K562 (cell line): ENCODE measurements at regions of chr9 and their contacts with region 1.

Region 1: DNA sequence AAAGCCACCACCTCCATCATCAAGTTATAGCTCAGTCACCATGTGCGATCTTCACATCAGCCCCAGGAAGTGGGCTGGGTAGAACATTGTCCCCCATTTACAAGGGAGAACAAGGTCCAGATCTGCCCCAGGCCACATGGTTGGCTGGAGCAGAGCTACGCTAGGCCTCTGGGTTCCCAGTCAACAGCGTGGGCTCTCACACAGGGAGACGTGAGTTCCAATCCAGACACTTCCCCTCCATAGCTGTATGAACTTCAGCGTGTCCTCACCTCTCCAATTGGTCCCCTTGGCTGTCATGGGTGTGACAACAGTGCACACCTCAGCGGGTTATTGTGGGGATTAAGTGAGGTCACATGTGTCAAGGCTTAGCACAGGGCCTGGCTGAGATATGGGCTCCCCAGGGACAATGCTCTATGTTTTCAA is 20.0 kb downstream of the AKNA start:
- DNase-seq: no peak
- ATAC-seq: no peak
- H3K4me3 ChIP-seq: no peak overlapping the region
- H3K27ac ChIP-seq: no peak overlapping the region
- H3K4me1 ChIP-seq: peaks cover 0 to 13% of the 10 kb centered on the region in 2 experiments; a peak in 2 of 5 replicates
- H3K27me3 ChIP-seq: no peaks in the 10 kb centered on the region
- CTCF ChIP-seq: no peak
- EP300 ChIP-seq: no peak
- POLR2A ChIP-seq: no peak
- RAD21 ChIP-seq: no peak

Region 2: GRCh38 chr9:114098016-114098935 is 269.5 kb before region 1 on chr9:
- CTCF ChIA-PET with region 1: no interaction called
- POLR2A ChIA-PET with region 1: no interaction called
- in situ Hi-C with region 1: no loop called
- intact Hi-C with region 1: no loop called
- DNase-seq: peak; percentile 37 to 84 (median 78)
- ATAC-seq: peak; percentile 93
- H3K4me3 ChIP-seq: peak overlapping the region; percentile 32
- H3K27ac ChIP-seq: no peak overlapping the region
- H3K4me1 ChIP-seq: peaks cover 0 to 12% of the 10 kb centered on the region in 2 experiments; a peak in 2 of 5 replicates
- H3K27me3 ChIP-seq: peaks cover 0 to 24% of the 10 kb centered on the region in 2 experiments; a peak in 2 of 5 replicates
- CTCF ChIP-seq: no peak
- EP300 ChIP-seq: no peak
- POLR2A ChIP-seq: no peak
- RAD21 ChIP-seq: no peak

Region 3: GRCh38 chr9:114348906-114349482 is 18.8 kb before region 1 on chr9:
- CTCF ChIA-PET with region 1: no interaction called
- POLR2A ChIA-PET with region 1: interaction called, 11 read pairs
- in situ Hi-C with region 1: no loop called
- intact Hi-C with region 1: no loop called
- DNase-seq: peak; percentile 85 to 90 (median 87)
- ATAC-seq: peak; percentile 94
- H3K4me3 ChIP-seq: no peak overlapping the region
- H3K27ac ChIP-seq: peak overlapping the region; percentile 33; the same call in 2 of the 3 replicates
- H3K4me1 ChIP-seq: peaks cover 13 to 14% of the 10 kb centered on the region in 2 experiments; a peak in 4 of 5 replicates
- H3K27me3 ChIP-seq: no peaks in the 10 kb centered on the region
- CTCF ChIP-seq: no peak
- EP300 ChIP-seq: no peak
- POLR2A ChIP-seq: no peak
- RAD21 ChIP-seq: no peak

Region 4: GRCh38 chr9:115213818-115214334 is 846.1 kb after region 1 on chr9:
- CTCF ChIA-PET with region 1: no interaction called
- POLR2A ChIA-PET with region 1: no interaction called
- in situ Hi-C with region 1: no loop called
- intact Hi-C with region 1: no loop called
- DNase-seq: no peak
- ATAC-seq: no peak
- H3K4me3 ChIP-seq: no peak overlapping the region
- H3K27ac ChIP-seq: no peak overlapping the region
- H3K4me1 ChIP-seq: no peaks in the 10 kb centered on the region
- H3K27me3 ChIP-seq: no peaks in the 10 kb centered on the region
- CTCF ChIP-seq: no peak
- EP300 ChIP-seq: no peak
- POLR2A ChIP-seq: no peak
- RAD21 ChIP-seq: no peak